WTC11 (cell line): ENCODE measurements at regions of chr12 and their contacts with region 1.

Region 1: GRCh38 chr12:52870351-52871290 is 21.8 kb upstream of the KRT78 start:
- DNase-seq: peak; percentile 90
- ATAC-seq: peak; percentile 74
- H3K4me3 Mint-ChIP-seq: no peak overlapping the region
- H3K27ac Mint-ChIP-seq: no peak overlapping the region
- H3K4me1 Mint-ChIP-seq: peaks cover 16% of the 10 kb centered on the region
- H3K27me3 Mint-ChIP-seq: peaks cover 26% of the 10 kb centered on the region
- CTCF ChIP-seq: peak; percentile 86

Region 2: GRCh38 chr12:52575256-52575655 is 295.4 kb before region 1 on chr12:
- CTCF ChIA-PET with region 1: interaction called, 12 read pairs
- POLR2A ChIA-PET with region 1: no interaction called
- DNase-seq: no peak
- ATAC-seq: no peak
- H3K4me3 Mint-ChIP-seq: no peak overlapping the region
- H3K27ac Mint-ChIP-seq: no peak overlapping the region
- H3K4me1 Mint-ChIP-seq: no peaks in the 10 kb centered on the region
- H3K27me3 Mint-ChIP-seq: no peaks in the 10 kb centered on the region
- CTCF ChIP-seq: no peak

Region 3: DNA sequence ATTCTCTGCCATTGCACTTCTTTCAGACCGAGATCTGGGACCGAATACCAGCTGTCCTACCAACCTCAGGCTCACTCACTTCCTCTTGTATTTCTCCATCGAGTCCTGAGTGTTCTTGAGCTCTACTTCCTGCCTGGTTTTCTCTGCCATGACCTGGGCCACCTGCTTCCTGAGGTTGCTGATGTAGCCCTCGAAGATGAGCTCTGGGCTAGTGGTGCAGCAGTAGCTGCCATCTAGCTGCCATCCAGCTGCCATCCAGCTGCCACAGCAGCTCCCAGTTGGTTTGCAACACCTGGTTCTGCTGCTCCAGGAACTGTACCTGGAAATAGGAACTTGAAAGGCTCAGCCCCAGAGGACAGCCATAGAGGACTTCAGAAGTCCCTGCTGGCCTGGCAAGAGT is 237.2 kb before region 1 on chr12:
- CTCF ChIA-PET with region 1: interaction called, 10 read pairs
- POLR2A ChIA-PET with region 1: no interaction called
- DNase-seq: no peak
- ATAC-seq: no peak
- H3K4me3 Mint-ChIP-seq: no peak overlapping the region
- H3K27ac Mint-ChIP-seq: no peak overlapping the region
- H3K4me1 Mint-ChIP-seq: no peaks in the 10 kb centered on the region
- H3K27me3 Mint-ChIP-seq: no peaks in the 10 kb centered on the region
- CTCF ChIP-seq: no peak

Region 4: GRCh38 chr12:52691076-52691840 is 179.4 kb before region 1 on chr12:
- CTCF ChIA-PET with region 1: interaction called, 64 read pairs
- POLR2A ChIA-PET with region 1: no interaction called
- DNase-seq: peak; percentile 63
- ATAC-seq: peak; percentile 65
- H3K4me3 Mint-ChIP-seq: peak overlapping the region; percentile 68
- H3K27ac Mint-ChIP-seq: no peak overlapping the region
- H3K4me1 Mint-ChIP-seq: peaks cover 14% of the 10 kb centered on the region
- H3K27me3 Mint-ChIP-seq: peaks cover 47% of the 10 kb centered on the region
- CTCF ChIP-seq: no peak

Region 5: GRCh38 chr12:52789637-52790426 is 80.8 kb before region 1 on chr12:
- CTCF ChIA-PET with region 1: interaction called, 25 read pairs
- POLR2A ChIA-PET with region 1: no interaction called
- DNase-seq: peak; percentile 56
- ATAC-seq: peak; percentile 75
- H3K4me3 Mint-ChIP-seq: peak overlapping the region; percentile 50
- H3K27ac Mint-ChIP-seq: no peak overlapping the region
- H3K4me1 Mint-ChIP-seq: peaks cover 7% of the 10 kb centered on the region
- H3K27me3 Mint-ChIP-seq: peaks cover 14% of the 10 kb centered on the region
- CTCF ChIP-seq: no peak

Region 6: DNA sequence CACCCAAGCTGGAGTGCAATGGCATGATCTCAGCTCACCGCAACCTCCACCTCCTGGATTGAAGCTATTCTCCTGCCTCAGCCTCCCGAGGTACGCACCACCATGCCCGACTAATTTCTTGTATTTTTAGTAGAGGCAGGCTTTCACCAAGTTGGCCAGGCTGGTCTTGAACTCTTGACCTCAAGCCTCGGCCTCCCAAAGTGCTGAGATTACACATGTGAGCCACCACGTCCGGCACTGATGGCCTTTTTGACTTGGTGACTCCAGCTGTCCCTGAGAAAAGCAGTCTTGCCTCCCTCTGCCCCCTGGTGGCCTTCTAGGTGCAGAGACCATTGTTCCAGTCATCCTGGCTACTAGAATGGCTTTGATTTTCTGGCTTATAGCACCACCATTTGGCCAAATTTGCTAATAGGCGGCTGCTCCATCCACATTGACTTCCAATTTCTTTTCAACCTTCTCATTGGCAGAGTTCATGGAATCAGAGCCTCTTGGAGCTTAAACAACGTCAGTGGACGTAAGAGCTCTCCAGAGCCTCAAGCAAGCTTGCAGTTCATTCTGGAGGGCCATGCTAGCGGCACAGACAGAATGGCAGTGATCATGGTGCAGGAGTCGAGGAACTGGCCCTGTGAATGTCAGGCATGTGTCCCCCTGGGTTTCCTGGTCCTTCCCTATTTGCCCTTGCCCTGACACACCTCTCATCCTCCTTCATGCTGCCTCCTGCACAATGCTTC is 110.2 kb after region 1 on chr12:
- CTCF ChIA-PET with region 1: interaction called, 26 read pairs
- POLR2A ChIA-PET with region 1: no interaction called
- DNase-seq: peak; percentile 92
- ATAC-seq: peak; percentile 86
- H3K4me3 Mint-ChIP-seq: no peak overlapping the region
- H3K27ac Mint-ChIP-seq: no peak overlapping the region
- H3K4me1 Mint-ChIP-seq: peaks cover 13% of the 10 kb centered on the region
- H3K27me3 Mint-ChIP-seq: no peaks in the 10 kb centered on the region; the same call in 1 of the 2 replicates
- CTCF ChIP-seq: peak; percentile 97

Region 7: GRCh38 chr12:53652366-53652765 is 781.7 kb after region 1 on chr12:
- CTCF ChIA-PET with region 1: no interaction called
- POLR2A ChIA-PET with region 1: no interaction called
- DNase-seq: no peak
- ATAC-seq: no peak
- H3K4me3 Mint-ChIP-seq: no peak overlapping the region
- H3K27ac Mint-ChIP-seq: no peak overlapping the region
- H3K4me1 Mint-ChIP-seq: no peaks in the 10 kb centered on the region
- H3K27me3 Mint-ChIP-seq: no peaks in the 10 kb centered on the region
- CTCF ChIP-seq: no peak